ENCODE measurements at regions of chr3 and their contacts with region 1.

Region 1: GRCh38 chr3:179015551-179016020 is 56.0 kb downstream of the ZMAT3 start:
- DNase-seq: peak; percentile 93
- ATAC-seq: peak; percentile 75
- H3K4me3 ChIP-seq: no peak overlapping the region
- H3K27ac ChIP-seq: peak overlapping the region; percentile 68
- H3K4me1 ChIP-seq: peaks cover 42% of the 10 kb centered on the region
- H3K27me3 ChIP-seq: no peaks in the 10 kb centered on the region
- CTCF ChIP-seq: peak; percentile 66 to 88 (median 83)
- EP300 ChIP-seq: no peak
- POLR2A ChIP-seq: no peak
- RAD21 ChIP-seq: peak; percentile 92

Region 2: GRCh38 chr3:178868681-178869080 is 146.9 kb before region 1 on chr3:
- CTCF ChIA-PET with region 1: no interaction called
- POLR2A ChIA-PET with region 1: no interaction called
- RAD21 ChIA-PET with region 1: no interaction called
- SMC1A ChIA-PET with region 1: no interaction called
- in situ Hi-C with region 1: no loop called
- intact Hi-C with region 1: no loop called
- DNase-seq: no peak
- ATAC-seq: no peak
- H3K4me3 ChIP-seq: no peak overlapping the region
- H3K27ac ChIP-seq: no peak overlapping the region
- H3K4me1 ChIP-seq: no peaks in the 10 kb centered on the region
- H3K27me3 ChIP-seq: no peaks in the 10 kb centered on the region
- CTCF ChIP-seq: no peak
- EP300 ChIP-seq: no peak
- POLR2A ChIP-seq: no peak
- RAD21 ChIP-seq: no peak

Region 3: DNA sequence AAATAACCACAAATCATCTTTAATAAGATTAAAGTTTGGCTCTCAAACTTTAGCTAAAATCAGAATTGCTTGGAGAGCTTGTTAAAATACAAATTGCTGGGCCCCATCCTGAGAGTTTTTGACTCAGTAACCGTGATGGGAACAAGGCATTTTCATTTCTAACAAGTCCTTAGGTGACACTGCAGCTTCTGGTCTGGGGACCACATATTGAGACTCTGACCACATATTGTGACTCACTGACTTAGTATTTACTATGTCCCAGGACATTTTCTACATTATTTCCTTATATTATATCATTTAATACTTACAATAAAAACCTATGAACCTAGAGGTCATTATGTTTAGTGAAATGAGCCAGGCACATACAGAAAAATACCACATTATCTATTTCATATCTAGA is 108.5 kb before region 1 on chr3:
- CTCF ChIA-PET with region 1: no interaction called
- POLR2A ChIA-PET with region 1: no interaction called
- RAD21 ChIA-PET with region 1: no interaction called
- SMC1A ChIA-PET with region 1: no interaction called
- in situ Hi-C with region 1: no loop called
- intact Hi-C with region 1: no loop called
- DNase-seq: no peak
- ATAC-seq: no peak
- H3K4me3 ChIP-seq: no peak overlapping the region
- H3K27ac ChIP-seq: no peak overlapping the region
- H3K4me1 ChIP-seq: no peaks in the 10 kb centered on the region
- H3K27me3 ChIP-seq: no peaks in the 10 kb centered on the region
- CTCF ChIP-seq: no peak
- EP300 ChIP-seq: no peak
- POLR2A ChIP-seq: no peak
- RAD21 ChIP-seq: no peak

Region 4: GRCh38 chr3:179037351-179037750 is 21.8 kb after region 1 on chr3:
- CTCF ChIA-PET with region 1: interaction called, 6 read pairs
- POLR2A ChIA-PET with region 1: interaction called, 3 read pairs
- RAD21 ChIA-PET with region 1: interaction called, 7 read pairs
- SMC1A ChIA-PET with region 1: interaction called, 13 read pairs
- in situ Hi-C with region 1: no loop called
- intact Hi-C with region 1: no loop called
- DNase-seq: no peak
- ATAC-seq: no peak
- H3K4me3 ChIP-seq: no peak overlapping the region
- H3K27ac ChIP-seq: no peak overlapping the region
- H3K4me1 ChIP-seq: no peaks in the 10 kb centered on the region
- H3K27me3 ChIP-seq: no peaks in the 10 kb centered on the region
- CTCF ChIP-seq: no peak
- EP300 ChIP-seq: no peak
- POLR2A ChIP-seq: no peak
- RAD21 ChIP-seq: no peak

Region 5: GRCh38 chr3:179071550-179072397 is 56.2 kb after region 1 on chr3 and contains the start of gene ZMAT3:
- CTCF ChIA-PET with region 1: interaction called, 120 read pairs
- POLR2A ChIA-PET with region 1: interaction called, 58 read pairs
- RAD21 ChIA-PET with region 1: interaction called, 95 read pairs
- SMC1A ChIA-PET with region 1: interaction called, 105 read pairs
- in situ Hi-C with region 1: no loop called
- intact Hi-C with region 1: loop called (anchors 1 kb)
- DNase-seq: no peak
- ATAC-seq: peak; percentile 73
- H3K4me3 ChIP-seq: peak within 1 kb of the TSS; percentile 70
- H3K27ac ChIP-seq: peak within 1 kb of the TSS; percentile 92
- H3K4me1 ChIP-seq: peaks cover 23% of the 10 kb centered on the region
- H3K27me3 ChIP-seq: no peaks in the 10 kb centered on the region
- CTCF ChIP-seq: no peak
- EP300 ChIP-seq: no peak
- POLR2A ChIP-seq: peak; percentile 93
- RAD21 ChIP-seq: no peak
- polyA plus RNA-seq, gene ZMAT3: 6.2 to 10.4 TPM

Region 6: DNA sequence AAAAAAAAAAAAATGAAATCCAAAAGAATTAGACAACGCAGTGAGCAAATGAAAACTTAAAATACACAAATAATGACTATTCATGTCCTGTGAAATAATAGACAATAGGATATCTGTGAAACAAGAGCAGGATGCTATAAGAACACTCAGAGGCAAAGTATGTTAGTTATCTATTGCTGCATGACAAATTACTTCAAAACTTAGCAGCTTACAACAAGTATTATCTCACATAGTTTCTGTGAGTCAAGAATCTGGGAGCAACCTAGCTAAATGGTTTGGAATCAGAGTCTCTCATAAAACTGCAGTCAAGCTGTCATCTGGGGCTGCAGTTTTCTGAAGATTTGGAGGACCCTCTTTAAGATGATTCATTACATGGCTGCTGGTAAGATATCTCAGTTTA is 92.5 kb after region 1 on chr3:
- CTCF ChIA-PET with region 1: interaction called, 22 read pairs
- POLR2A ChIA-PET with region 1: no interaction called
- RAD21 ChIA-PET with region 1: interaction called, 4 read pairs
- SMC1A ChIA-PET with region 1: interaction called, 6 read pairs
- in situ Hi-C with region 1: no loop called
- intact Hi-C with region 1: no loop called
- DNase-seq: no peak
- ATAC-seq: no peak
- H3K4me3 ChIP-seq: no peak overlapping the region
- H3K27ac ChIP-seq: no peak overlapping the region
- H3K4me1 ChIP-seq: peaks cover 3% of the 10 kb centered on the region; the same call in 1 of the 2 replicates
- H3K27me3 ChIP-seq: no peaks in the 10 kb centered on the region
- CTCF ChIP-seq: no peak
- EP300 ChIP-seq: no peak
- POLR2A ChIP-seq: no peak
- RAD21 ChIP-seq: no peak

Region 7: GRCh38 chr3:179309225-179310078 is 293.9 kb after region 1 on chr3:
- CTCF ChIA-PET with region 1: interaction called, 55 read pairs
- POLR2A ChIA-PET with region 1: interaction called, 3 read pairs
- RAD21 ChIA-PET with region 1: interaction called, 39 read pairs
- SMC1A ChIA-PET with region 1: interaction called, 29 read pairs
- in situ Hi-C with region 1: no loop called
- intact Hi-C with region 1: no loop called
- DNase-seq: no peak
- ATAC-seq: peak; percentile 95
- H3K4me3 ChIP-seq: no peak overlapping the region
- H3K27ac ChIP-seq: no peak overlapping the region
- H3K4me1 ChIP-seq: peaks cover 4% of the 10 kb centered on the region
- H3K27me3 ChIP-seq: no peaks in the 10 kb centered on the region
- CTCF ChIP-seq: no peak
- EP300 ChIP-seq: no peak
- POLR2A ChIP-seq: no peak
- RAD21 ChIP-seq: no peak

Region 8: DNA sequence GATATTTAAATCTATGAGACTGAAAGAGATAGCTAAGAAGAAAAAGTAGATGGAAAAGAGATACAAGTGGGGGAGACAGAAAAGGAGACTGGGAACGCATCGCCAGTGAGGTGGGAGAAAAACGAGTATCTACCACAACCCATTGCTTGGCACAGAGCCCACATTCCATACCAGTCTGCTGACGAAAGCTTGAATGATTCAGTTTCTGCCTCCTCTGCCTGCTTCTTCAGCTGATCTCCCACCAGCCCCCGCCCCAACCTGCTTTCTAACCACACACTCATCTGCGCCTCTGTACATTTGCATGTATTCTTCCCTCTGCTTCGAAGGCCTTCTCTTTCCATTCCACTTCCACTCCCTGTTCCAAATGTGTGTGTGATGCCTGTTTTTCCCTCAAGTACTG is 825.4 kb after region 1 on chr3:
- CTCF ChIA-PET with region 1: no interaction called
- POLR2A ChIA-PET with region 1: no interaction called
- RAD21 ChIA-PET with region 1: no interaction called
- SMC1A ChIA-PET with region 1: no interaction called
- in situ Hi-C with region 1: no loop called
- intact Hi-C with region 1: no loop called
- DNase-seq: no peak
- ATAC-seq: no peak
- H3K4me3 ChIP-seq: no peak overlapping the region
- H3K27ac ChIP-seq: no peak overlapping the region
- H3K4me1 ChIP-seq: no peaks in the 10 kb centered on the region
- H3K27me3 ChIP-seq: no peaks in the 10 kb centered on the region
- CTCF ChIP-seq: no peak
- EP300 ChIP-seq: no peak
- POLR2A ChIP-seq: no peak
- RAD21 ChIP-seq: no peak

Measured in GM12878 (cell line).